Right ventricle myocardium inferior (tissue), 1 donor: ENCODE measurements at regions of chr19 and their contacts with region 1.

Region 1: DNA sequence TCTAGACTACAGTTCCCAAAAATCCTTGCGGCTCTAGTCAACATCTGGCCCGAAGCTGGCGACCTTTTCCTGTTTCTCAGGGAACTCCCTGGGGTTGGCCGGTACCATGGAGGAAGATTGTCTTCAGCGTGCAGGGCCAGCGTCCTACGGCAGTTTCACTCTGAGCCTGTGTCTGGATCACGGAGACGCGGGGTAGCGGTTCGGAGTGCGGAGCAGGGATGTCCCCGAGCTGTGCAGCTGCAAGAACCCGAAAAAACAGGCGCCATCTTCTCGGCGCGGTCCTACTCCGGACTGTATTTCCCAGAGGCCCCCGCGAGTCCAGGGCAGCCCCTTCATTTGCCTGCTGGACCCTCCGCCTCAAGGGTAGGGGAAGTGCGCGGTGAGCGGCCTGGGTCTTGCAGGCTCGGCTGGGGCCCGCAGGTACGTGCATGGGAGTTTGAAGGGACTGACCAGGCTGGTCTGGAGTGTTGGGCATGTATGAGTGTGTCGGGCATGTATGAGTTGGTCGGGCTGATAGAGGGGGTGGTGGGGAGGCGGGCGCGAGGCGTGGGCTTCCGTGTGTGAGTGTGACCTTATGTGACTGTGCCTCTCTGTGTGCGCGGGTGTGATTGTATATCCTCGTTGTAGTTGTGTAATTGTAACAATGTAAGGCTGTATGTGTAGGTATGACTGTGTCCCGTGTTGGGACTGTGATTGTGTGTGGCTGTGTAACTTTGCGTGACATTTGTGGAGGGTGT is at the start of gene ZNF383:
- DNase-seq: peak; percentile 94
- ATAC-seq: peak; percentile 98
- total RNA-seq, gene ZNF383: 9.1 TPM

Region 2: GRCh38 chr19:36973021-36973843 is 244.8 kb before region 1 on chr19:
- intact Hi-C with region 1: loop called (anchors 5 kb)
- DNase-seq: peak; percentile 91
- ATAC-seq: peak; percentile 99

Region 3: GRCh38 chr19:37370880-37371661 is 153.0 kb after region 1 on chr19 and contains the start of gene ZNF527:
- intact Hi-C with region 1: loop called (anchors 5 kb)
- DNase-seq: peak; percentile 98
- ATAC-seq: peak; percentile 99
- total RNA-seq, gene ZNF527: 5.6 TPM